ENCODE measurements at regions of chr16 and their contacts with region 1.

Region 1: DNA sequence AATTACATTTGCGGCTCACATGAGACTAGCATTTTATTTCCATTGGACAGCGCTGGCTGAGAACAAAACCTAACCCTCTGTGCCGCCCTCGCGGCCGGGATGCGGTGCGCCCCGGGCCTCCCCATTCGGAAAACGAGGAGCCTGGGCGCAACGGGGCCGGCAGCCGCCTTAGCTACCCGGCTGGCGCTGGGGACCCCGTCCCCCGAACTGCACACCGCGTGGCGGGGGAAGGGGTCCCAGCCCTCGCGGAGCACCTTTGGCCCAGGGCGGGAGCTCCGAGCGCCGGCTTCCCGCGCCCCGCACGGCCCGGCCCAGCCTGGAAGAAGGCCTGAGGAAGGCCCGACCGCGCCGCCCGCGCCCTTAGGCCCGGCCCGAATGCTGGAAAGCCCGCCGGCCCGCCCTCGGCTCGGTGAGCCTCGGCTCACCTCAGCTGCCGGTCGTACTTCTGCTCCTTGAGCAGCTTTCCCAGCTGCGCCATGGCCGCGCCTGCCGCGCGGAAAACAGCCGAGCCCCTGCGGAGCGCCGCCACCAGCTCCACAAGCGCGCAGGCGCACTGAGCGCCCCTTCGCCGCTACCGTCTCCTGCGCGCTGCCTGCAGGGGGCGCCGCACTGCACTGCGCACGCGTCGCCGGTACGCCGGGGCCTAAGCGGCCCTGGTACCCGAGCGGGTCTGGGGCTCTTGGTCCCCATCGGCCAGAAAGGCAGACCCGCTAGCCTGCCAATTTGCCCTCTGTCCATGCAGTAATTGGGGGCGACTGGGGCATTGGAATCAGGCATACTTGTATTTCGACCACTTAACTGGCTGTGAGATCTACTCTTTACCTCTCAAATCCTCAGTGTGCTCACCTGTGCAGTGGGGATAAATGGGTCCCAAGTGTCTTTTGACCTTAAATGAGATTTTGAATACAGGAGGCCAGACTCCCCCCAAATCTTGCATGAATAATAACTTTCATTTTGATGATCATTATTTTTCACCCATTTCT is at the start of gene NAE1:
- DNase-seq: peak; percentile 96
- CTCF ChIP-seq: peak; percentile 99

Region 2: DNA sequence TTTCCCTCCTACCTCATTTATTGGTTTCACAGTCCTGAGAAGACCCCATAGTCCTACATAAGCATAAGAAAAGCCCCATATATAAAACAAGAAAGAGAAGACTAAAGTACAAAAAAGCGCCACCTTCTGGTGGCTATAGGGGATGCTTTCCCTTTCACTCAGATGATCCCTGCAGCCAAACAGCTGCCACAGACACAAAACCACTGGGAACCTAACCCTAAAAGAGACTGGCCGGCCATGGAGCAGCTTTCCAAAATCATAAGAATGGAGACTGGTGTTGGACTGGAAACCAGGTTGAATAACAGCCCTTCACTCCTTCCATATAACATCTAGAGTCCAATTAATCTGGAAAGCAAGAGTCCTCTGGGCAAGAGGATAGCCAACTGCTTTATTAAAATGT is 90.7 kb before region 1 on chr16:
- CTCF ChIA-PET with region 1: interaction called, 20 read pairs
- POLR2A ChIA-PET with region 1: no interaction called
- DNase-seq: peak; percentile 64
- CTCF ChIP-seq: no peak

Region 3: GRCh38 chr16:66801320-66802105 is 29.2 kb before region 1 on chr16 and contains the start of gene TERB1:
- CTCF ChIA-PET with region 1: interaction called, 10 read pairs
- POLR2A ChIA-PET with region 1: no interaction called
- DNase-seq: peak; percentile 13
- CTCF ChIP-seq: no peak

Region 4: GRCh38 chr16:66844342-66845079 is 13.8 kb after region 1 on chr16 and contains the start of gene CA7:
- CTCF ChIA-PET with region 1: interaction called, 68 read pairs
- POLR2A ChIA-PET with region 1: no interaction called
- DNase-seq: no peak
- CTCF ChIP-seq: no peak

Region 5: GRCh38 chr16:66858740-66859396 is 28.2 kb after region 1 on chr16:
- CTCF ChIA-PET with region 1: interaction called, 33 read pairs
- POLR2A ChIA-PET with region 1: no interaction called
- DNase-seq: no peak
- CTCF ChIP-seq: no peak